ENCODE measurements at regions of chr3 and their contacts with region 1.

Region 1: DNA sequence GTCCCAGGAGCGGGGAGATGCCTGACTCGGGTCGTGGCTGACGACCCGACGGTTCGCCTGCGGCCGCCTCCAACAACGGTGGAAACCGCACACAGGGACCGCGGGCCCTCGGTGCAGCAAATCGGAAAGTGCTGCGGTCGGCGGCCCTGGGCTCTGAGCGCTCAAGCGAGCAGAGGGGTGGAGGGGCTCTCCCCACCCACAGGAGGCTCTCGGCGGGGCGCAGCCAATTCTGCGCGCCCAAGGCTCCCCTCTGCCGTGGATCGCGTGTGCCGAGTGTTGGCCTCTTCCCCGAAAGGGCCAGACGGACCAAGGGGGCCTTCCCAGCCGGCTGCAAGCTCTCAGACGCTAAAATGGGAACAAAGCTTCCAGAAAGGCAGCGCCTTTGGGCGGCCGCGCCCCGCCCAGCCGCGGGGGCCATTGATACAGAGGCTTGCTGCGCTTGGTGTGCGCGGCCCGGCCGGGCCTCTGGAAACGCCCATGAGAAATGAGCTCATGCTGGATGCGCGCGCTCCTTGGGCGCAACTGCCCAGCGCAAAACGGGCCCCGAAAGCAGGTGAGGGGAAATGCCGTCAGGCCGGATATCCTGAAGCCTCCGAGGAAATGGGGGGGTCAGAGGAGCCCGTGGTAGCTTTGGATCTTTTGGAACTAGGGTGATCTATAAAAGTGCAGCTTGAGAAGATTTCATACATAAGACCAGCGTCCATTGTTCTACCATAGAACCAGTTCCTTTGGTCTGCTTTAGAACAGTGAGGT is 1.2 kb upstream of the GSK3B start:
- DNase-seq: peak; percentile 84
- ATAC-seq: peak; percentile 62
- H3K4me3 ChIP-seq: peak overlapping the region; percentile 54 to 89
- H3K27ac ChIP-seq: peak overlapping the region; percentile 99
- H3K4me1 ChIP-seq: peaks cover 0 to 25% of the 10 kb centered on the region in 2 experiments; a peak in 3 of 4 replicates
- H3K27me3 ChIP-seq: no peaks in the 10 kb centered on the region
- CTCF ChIP-seq: no peak
- POLR2A ChIP-seq: peak; percentile 88
- RAD21 ChIP-seq: no peak

Region 2: GRCh38 chr3:119463171-119464169 is 631.9 kb before region 1 on chr3 and contains the start of gene TMEM39A:
- CTCF ChIA-PET with region 1: no interaction called
- POLR2A ChIA-PET with region 1: no interaction called
- RAD21 ChIA-PET with region 1: no interaction called
- intact Hi-C with region 1: loop called (anchors 10 kb)
- DNase-seq: peak; percentile 95
- ATAC-seq: peak; percentile 95
- H3K4me3 ChIP-seq: peak within 1 kb of the TSS; percentile 91 to 99
- H3K27ac ChIP-seq: peak within 1 kb of the TSS; percentile 56
- H3K4me1 ChIP-seq: peaks cover 13 to 23% of the 10 kb centered on the region in 2 experiments
- H3K27me3 ChIP-seq: no peaks in the 10 kb centered on the region
- CTCF ChIP-seq: 0 out of 6 replicates have a peak, but pooled peaks of 1 of the 3 experiments have one; percentile 4
- POLR2A ChIP-seq: peak; percentile 98
- RAD21 ChIP-seq: no peak
- total RNA-seq, gene TMEM39A: 40.2 TPM

Region 3: GRCh38 chr3:119990888-119991287 is 104.5 kb before region 1 on chr3:
- CTCF ChIA-PET with region 1: no interaction called
- POLR2A ChIA-PET with region 1: no interaction called
- RAD21 ChIA-PET with region 1: no interaction called
- intact Hi-C with region 1: no loop called
- DNase-seq: no peak
- ATAC-seq: no peak
- H3K4me3 ChIP-seq: no peak overlapping the region
- H3K27ac ChIP-seq: no peak overlapping the region
- H3K4me1 ChIP-seq: no peaks in the 10 kb centered on the region
- H3K27me3 ChIP-seq: no peaks in the 10 kb centered on the region
- CTCF ChIP-seq: no peak
- POLR2A ChIP-seq: no peak
- RAD21 ChIP-seq: no peak

Region 4: GRCh38 chr3:120160050-120160449 is 64.6 kb after region 1 on chr3:
- CTCF ChIA-PET with region 1: no interaction called
- POLR2A ChIA-PET with region 1: interaction called, 6 read pairs
- RAD21 ChIA-PET with region 1: no interaction called
- intact Hi-C with region 1: loop called (anchors 1 kb)
- DNase-seq: peak; percentile 61
- ATAC-seq: no peak
- H3K4me3 ChIP-seq: no peak overlapping the region
- H3K27ac ChIP-seq: no peak overlapping the region
- H3K4me1 ChIP-seq: peaks cover 0 to 5% of the 10 kb centered on the region in 2 experiments; a peak in 1 of 4 replicates
- H3K27me3 ChIP-seq: peaks cover 4% of the 10 kb centered on the region; the same call in 1 of the 2 replicates
- CTCF ChIP-seq: no peak
- POLR2A ChIP-seq: no peak
- RAD21 ChIP-seq: 0 out of 2 replicates have a peak, but pooled peaks have one; percentile 12

Measured in HCT116 (cell line).